Psoas muscle (tissue), 8 donors: ENCODE measurements at regions of chr2 and their contacts with region 1.

Region 1: DNA sequence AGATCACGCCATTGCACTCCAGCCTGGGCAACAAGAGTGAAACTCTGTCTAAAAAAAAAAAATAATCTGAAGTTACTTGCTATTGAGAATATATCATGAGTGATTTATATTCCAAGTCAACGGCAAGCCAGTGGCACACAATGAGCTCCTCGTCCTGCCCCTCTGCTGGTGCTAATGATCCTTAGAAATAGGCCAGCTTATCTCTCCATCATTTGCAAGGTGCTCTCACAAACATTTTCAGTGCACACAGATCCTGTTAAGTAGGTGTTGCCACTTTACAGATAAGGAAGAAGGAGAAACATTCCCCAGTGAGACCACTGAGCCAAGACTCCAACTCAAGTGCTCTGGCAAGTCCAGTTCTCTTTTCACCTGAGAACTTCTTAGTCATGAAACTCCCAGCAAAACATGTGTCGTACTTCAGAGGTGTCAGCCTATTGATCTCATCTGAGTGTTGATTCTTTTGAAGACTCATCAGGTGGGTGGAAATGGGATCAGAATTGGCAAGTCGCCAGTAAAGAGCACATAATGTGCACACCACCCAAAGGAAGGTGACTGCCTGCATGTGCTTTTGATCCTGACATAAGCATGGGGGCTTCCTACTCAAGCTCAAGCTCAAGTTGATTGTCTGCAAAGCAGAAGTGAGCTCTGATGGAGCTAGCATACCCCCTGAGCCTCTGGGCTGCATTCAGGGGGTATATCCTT is 91.2 kb upstream of the GPR45 start:
- DNase-seq: no peak
- ATAC-seq: no peak
- H3K4me3 ChIP-seq: no peak overlapping the region
- H3K27ac ChIP-seq: no peak overlapping the region
- H3K4me1 ChIP-seq: no peaks in the 10 kb centered on the region
- H3K27me3 ChIP-seq: peaks cover 3 to 26% (median 5%) of the 10 kb centered on the region in 3 donors
- CTCF ChIP-seq: no peak

Region 2: GRCh38 chr2:103669531-103669930 is 1480.9 kb before region 1 on chr2:
- intact Hi-C with region 1: no loop called
- DNase-seq: no peak
- ATAC-seq: no peak
- H3K4me3 ChIP-seq: no peak overlapping the region
- H3K27ac ChIP-seq: no peak overlapping the region
- H3K4me1 ChIP-seq: no peaks in the 10 kb centered on the region
- H3K27me3 ChIP-seq: no peaks in the 10 kb centered on the region
- CTCF ChIP-seq: no peak

Region 3: DNA sequence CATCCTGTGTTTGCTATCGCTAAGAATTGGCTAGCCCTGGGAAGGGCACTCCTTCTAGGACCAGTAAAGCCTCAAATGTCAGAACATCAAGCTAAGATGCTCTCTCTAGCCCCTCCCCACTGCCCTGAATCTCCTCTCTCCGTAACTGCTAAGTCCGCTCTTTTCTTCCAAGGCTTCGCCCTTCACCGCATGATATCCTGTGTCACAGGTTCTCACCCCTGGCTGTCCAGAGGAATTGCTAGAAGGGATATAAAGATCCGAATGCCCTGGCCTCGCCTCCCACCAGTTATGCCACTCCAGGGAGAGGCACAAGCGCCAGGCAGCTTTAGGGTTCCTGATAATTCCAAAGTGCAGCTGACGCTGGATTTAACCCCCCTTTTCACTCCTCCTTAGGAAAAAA is 74.1 kb after region 1 on chr2:
- intact Hi-C with region 1: loop called in 1 of 2 experiments (anchors 2 kb)
- DNase-seq: no peak
- ATAC-seq: no peak
- H3K4me3 ChIP-seq: no peak overlapping the region
- H3K27ac ChIP-seq: no peak overlapping the region
- H3K4me1 ChIP-seq: no peaks in the 10 kb centered on the region
- H3K27me3 ChIP-seq: no peaks in the 10 kb centered on the region
- CTCF ChIP-seq: no peak